ENCODE measurements at regions of chr5 and their contacts with region 1.

Region 1: DNA sequence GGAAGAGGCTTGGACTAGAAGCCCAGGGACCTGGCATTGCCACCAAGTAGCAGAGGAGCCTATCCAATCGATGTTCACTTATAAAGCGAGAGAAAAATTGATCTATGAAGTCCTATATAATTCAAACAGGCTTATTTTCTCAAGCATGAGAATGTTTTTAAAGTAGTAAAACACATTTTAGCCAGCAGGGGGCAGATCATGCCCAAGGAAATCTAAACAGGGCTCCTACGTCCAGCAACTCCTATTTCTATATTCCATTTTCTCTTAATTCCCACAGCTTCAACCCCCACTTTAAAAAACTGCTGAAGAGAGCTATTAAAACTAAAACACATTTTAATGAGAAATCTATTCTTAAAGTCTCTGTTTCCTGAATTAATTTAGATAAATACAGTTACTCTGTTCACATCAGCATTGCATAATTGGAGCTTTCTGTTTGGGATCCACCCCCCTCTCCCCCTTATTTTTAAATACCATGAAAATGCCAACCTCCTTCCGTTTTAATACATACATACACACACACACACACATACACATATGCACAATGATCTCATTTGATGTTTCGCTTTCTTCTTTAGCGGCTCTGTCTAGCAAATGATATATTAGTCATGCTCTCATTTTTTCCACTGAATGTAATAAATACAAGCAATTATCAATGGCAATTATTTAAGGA is 144.9 kb downstream of the MYO10 start:
- DNase-seq: peak; percentile 33
- ATAC-seq: peak; percentile 55
- H3K4me3 Mint-ChIP-seq: no peak overlapping the region
- H3K27ac Mint-ChIP-seq: no peak overlapping the region
- H3K4me1 Mint-ChIP-seq: peaks cover 6% of the 10 kb centered on the region
- H3K27me3 Mint-ChIP-seq: peaks cover 5% of the 10 kb centered on the region

Region 2: DNA sequence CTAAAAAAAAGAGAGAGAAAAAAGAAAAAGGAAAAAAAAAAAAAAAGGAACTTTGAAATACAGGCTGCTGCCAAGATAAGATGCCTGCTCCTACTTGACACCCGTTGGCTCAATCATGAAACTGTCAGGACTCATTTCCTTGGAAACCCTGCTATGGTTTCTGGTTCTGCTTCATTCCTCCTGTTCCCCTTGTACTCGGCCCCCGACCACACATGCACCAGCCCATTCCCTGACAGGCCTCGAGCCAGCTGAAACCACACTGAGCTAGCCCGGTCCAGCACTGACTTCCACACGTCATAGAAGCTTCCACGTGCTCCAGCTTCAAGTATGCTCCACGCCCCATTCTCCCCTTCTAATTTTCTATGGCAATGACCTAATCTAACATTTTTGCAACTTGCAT is 51.7 kb after region 1 on chr5:
- CTCF ChIA-PET with region 1: no interaction called
- POLR2A ChIA-PET with region 1: no interaction called
- intact Hi-C with region 1: no loop called
- DNase-seq: no peak
- ATAC-seq: no peak
- H3K4me3 Mint-ChIP-seq: no peak overlapping the region
- H3K27ac Mint-ChIP-seq: no peak overlapping the region
- H3K4me1 Mint-ChIP-seq: no peaks in the 10 kb centered on the region
- H3K27me3 Mint-ChIP-seq: peaks cover 15% of the 10 kb centered on the region

Region 3: DNA sequence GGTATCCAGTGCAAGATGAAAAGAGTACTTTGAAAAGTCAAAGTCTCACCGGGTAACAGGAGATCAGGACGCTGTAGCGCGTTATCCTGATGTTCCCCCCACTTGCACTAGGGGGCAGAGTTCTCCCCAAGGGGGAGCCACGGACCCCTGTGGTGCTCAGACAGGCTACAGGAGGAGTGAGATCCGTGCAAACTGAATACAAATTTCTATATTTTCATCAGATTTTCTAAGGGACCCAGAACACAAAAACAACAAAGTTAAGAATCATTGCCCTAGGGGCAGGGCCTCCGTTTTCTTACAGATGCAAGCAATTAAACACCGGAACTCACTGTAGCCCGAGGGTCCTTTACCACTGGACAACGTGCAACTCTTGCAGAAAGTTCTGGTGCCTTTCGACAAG is 143.0 kb after region 1 on chr5:
- CTCF ChIA-PET with region 1: no interaction called
- POLR2A ChIA-PET with region 1: no interaction called
- intact Hi-C with region 1: loop called (anchors 2 to 10 kb)
- DNase-seq: peak; percentile 71
- ATAC-seq: peak; percentile 51
- H3K4me3 Mint-ChIP-seq: no peak overlapping the region
- H3K27ac Mint-ChIP-seq: no peak overlapping the region
- H3K4me1 Mint-ChIP-seq: peaks cover 22% of the 10 kb centered on the region
- H3K27me3 Mint-ChIP-seq: peaks cover 69% of the 10 kb centered on the region

Region 4: DNA sequence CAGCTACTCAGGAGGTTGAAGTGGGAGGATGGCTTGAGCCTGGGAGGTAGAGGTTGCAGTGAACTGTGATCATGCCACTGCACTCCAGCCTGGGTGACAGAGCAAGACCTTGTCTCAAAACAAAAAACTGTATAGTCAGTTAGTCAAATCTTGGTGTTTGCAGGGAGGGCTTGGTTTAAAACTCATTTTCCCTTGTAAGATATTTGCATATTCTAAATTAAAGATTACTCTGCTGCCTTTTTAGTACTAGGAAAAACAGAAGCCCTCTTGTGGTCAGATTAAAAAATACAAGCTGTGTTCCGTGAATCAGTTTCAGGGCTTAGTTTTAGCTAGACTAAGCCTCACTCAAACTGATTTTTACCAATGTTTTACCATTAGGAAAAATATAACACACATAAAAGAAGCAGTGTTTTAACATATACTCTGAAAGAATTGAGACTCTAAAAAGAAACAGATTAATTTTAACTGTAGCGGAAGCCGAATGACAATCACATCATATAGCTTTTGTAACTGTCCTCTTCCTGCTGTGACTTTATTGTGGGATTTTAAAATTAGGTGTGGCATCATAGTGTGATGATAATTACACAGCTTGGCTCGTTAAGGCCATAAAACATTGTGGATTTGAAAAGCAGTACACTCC is 341.4 kb after region 1 on chr5:
- CTCF ChIA-PET with region 1: interaction called, 15 read pairs
- POLR2A ChIA-PET with region 1: no interaction called
- intact Hi-C with region 1: loop called (anchors 1 kb)
- DNase-seq: no peak
- ATAC-seq: no peak
- H3K4me3 Mint-ChIP-seq: no peak overlapping the region
- H3K27ac Mint-ChIP-seq: no peak overlapping the region
- H3K4me1 Mint-ChIP-seq: peaks cover 6% of the 10 kb centered on the region
- H3K27me3 Mint-ChIP-seq: peaks cover 23% of the 10 kb centered on the region

Region 5: DNA sequence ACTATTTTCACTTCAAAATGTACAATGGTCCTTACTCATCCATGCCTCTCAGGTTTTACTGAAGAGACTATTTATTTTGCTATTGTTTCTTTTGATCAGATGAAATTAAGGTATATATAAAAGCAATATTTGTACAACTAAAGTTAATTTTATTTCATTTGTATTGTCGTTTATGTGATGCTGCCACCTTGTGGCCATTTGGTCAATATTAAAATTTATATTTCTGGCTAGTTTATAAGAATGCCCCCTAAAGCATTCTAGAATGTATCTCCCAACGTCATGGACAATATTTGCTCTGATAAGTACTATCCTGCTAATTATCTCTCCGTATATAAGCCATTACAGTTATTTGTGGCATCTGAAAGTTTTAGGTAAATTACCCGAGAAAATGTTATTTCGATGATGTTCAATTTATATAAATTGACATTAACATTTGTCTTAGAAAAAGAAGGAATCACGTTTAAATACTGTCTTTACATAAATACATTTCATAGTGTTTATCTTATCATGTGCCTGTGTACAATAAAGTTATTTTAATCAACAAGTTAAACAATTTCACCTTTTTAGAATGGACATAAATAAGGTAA is 1523.1 kb after region 1 on chr5:
- CTCF ChIA-PET with region 1: no interaction called
- POLR2A ChIA-PET with region 1: no interaction called
- intact Hi-C with region 1: loop called in 1 of 2 experiments (anchors 10 kb)
- DNase-seq: peak; percentile 20
- ATAC-seq: no peak
- H3K4me3 Mint-ChIP-seq: no peak overlapping the region
- H3K27ac Mint-ChIP-seq: no peak overlapping the region
- H3K4me1 Mint-ChIP-seq: no peaks in the 10 kb centered on the region
- H3K27me3 Mint-ChIP-seq: no peaks in the 10 kb centered on the region

Measured in activated CD4-positive, alpha-beta T cell treated with anti-CD3 and anti-CD28 coated beads for 36 hours (primary cell).